ENCODE measurements at regions of chr10 and their contacts with region 1.

Region 1: GRCh38 chr10:95430231-95430951 is 130.8 kb downstream of the SORBS1 start:
- DNase-seq: peak in 29 of 35 experiments; percentile 6 to 68 (median 24)
- ATAC-seq: peak; percentile 63 to 75 (median 70)
- H3K4me3 ChIP-seq: no peak overlapping the region
- H3K4me3 Mint-ChIP-seq: no peak overlapping the region
- H3K27ac ChIP-seq: no peak overlapping the region
- H3K27ac Mint-ChIP-seq: no peak overlapping the region
- H3K4me1 ChIP-seq: peaks cover 0 to 2% of the 10 kb centered on the region in 2 experiments
- H3K4me1 Mint-ChIP-seq: no peaks in the 10 kb centered on the region
- H3K27me3 ChIP-seq: peaks cover 0 to 11% of the 10 kb centered on the region in 2 experiments
- H3K27me3 Mint-ChIP-seq: no peaks in the 10 kb centered on the region

Region 2: DNA sequence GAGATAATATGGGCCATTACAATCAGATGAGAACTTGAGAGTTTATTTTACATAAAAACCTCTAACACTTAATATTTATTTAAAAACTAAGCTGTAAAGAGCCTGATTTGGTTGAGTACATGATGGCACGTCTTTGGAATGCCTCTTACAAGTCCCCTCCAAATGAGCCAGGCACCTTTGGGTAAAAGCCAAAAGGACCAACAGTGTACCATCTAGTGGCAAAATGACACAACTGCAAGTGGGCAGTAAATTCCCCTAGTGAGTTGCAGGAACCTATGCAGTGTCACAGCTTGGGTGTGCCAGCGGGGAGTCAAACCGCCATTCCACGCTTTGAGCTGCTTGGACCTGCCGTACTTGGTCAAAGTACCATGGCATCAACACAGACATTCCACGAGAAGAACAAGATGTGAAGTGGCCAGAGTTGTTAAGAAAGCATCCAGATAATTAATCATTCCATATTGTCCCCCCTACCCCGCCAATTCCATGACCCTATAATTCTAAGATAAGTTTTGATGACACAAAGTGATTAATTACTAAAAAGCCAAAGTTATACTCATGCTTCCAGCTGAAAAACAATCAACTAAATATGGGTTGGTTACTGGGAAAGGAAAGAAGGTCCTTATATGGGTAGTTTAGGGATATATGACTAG is 15.6 kb after region 1 on chr10:
- CTCF ChIA-PET with region 1: interaction called, 9 to 25 read pairs
- POLR2A ChIA-PET with region 1: interaction called in 1 of 2 experiments, 3 read pairs
- DNase-seq: peak in 11 of 35 experiments; percentile 1 to 53 (median 7)
- ATAC-seq: peak in 2 of 4 experiments; percentile 48 to 58
- H3K4me3 ChIP-seq: no peak overlapping the region
- H3K4me3 Mint-ChIP-seq: no peak overlapping the region
- H3K27ac ChIP-seq: no peak overlapping the region
- H3K27ac Mint-ChIP-seq: no peak overlapping the region
- H3K4me1 ChIP-seq: no peaks in the 10 kb centered on the region
- H3K4me1 Mint-ChIP-seq: peaks cover 0 to 4% (median 4%) of the 10 kb centered on the region in 3 donors
- H3K27me3 ChIP-seq: peaks cover 0 to 5% of the 10 kb centered on the region in 2 experiments
- H3K27me3 Mint-ChIP-seq: peaks cover 0 to 8% of the 10 kb centered on the region in 2 donors

Region 3: DNA sequence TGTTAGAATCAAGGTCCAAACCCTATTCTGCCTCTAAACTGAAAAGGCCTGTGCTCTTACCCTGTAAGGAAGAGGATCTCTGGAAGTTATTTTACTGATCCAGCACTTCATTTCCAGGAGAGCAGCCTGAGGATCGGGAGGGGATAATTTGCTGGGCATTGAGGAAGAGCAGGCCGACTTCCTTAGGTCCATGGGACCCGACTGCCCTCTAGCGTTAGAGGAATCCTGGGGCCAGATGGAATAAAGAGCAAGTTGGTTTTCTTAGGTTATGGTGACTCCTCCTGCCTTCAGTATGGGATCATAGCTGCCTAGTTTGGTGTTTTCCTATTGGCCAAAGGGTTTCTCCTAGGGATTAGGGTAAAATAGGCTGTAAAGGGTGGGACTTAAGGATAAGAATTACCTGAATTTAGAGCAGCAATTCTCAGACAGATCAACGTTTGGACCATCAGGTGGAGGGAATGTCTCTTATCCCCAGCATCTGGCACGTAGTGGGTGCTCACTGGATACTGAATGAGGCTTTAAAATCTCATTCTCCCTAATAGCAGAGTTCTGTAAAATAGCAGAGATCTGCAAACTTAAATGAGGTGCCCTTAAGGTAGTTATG is 170.8 kb after region 1 on chr10:
- CTCF ChIA-PET with region 1: interaction called, 11 to 24 read pairs
- POLR2A ChIA-PET with region 1: no interaction called
- DNase-seq: peak in 29 of 35 experiments; percentile 3 to 64 (median 21)
- ATAC-seq: peak in 2 of 4 experiments; percentile 51 to 53
- H3K4me3 ChIP-seq: no peak overlapping the region
- H3K4me3 Mint-ChIP-seq: no peak overlapping the region
- H3K27ac ChIP-seq: no peak overlapping the region
- H3K27ac Mint-ChIP-seq: no peak overlapping the region
- H3K4me1 ChIP-seq: no peaks in the 10 kb centered on the region
- H3K4me1 Mint-ChIP-seq: no peaks in the 10 kb centered on the region
- H3K27me3 ChIP-seq: no peaks in the 10 kb centered on the region
- H3K27me3 Mint-ChIP-seq: peaks cover 5 to 7% of the 10 kb centered on the region in 2 donors

Measured in T-cell (primary cell).